IMR-90 (cell line): ENCODE measurements at regions of chr2 and their contacts with region 1.

Region 1: GRCh38 chr2:176638167-176639015 is 369.1 kb downstream of the MTX2 start:
- DNase-seq: peak; percentile 45
- ATAC-seq: peak; percentile 92
- H3K4me3 ChIP-seq: peak overlapping the region; percentile 38
- H3K27ac ChIP-seq: no peak overlapping the region
- H3K4me1 ChIP-seq: no peaks in the 10 kb centered on the region
- H3K27me3 ChIP-seq: peaks cover 33% of the 10 kb centered on the region
- CTCF ChIP-seq: peak; percentile 93
- POLR2A ChIP-seq: no peak
- RAD21 ChIP-seq: peak; percentile 92

Region 2: GRCh38 chr2:175734679-175735078 is 903.7 kb before region 1 on chr2:
- CTCF ChIA-PET with region 1: no interaction called
- POLR2A ChIA-PET with region 1: no interaction called
- dilution Hi-C with region 1: no loop called
- in situ Hi-C with region 1: no loop called
- intact Hi-C with region 1: no loop called
- DNase-seq: no peak
- ATAC-seq: no peak
- H3K4me3 ChIP-seq: no peak overlapping the region
- H3K27ac ChIP-seq: no peak overlapping the region
- H3K4me1 ChIP-seq: no peaks in the 10 kb centered on the region
- H3K27me3 ChIP-seq: no peaks in the 10 kb centered on the region; the same call in 1 of the 2 replicates
- CTCF ChIP-seq: no peak
- POLR2A ChIP-seq: no peak
- RAD21 ChIP-seq: no peak

Region 3: DNA sequence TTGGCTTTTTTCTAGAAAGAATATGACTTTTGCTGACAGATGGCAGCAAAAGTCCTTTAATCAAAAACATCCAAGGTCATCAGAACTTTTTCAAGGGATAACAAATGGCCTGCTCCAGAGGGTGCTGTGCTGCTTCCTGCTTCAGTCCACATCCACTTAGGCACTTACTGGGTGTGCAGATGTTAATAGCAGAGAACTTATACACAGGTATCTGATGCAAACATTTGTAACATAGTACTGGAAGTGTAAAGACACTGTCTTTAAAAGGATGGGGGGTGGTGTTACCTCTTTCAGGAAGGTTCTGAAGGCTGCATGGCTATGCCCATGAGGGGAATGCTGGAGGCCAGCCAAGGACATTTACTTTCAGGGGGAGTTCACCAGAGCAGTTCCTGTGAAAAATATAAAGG is 503.4 kb before region 1 on chr2:
- CTCF ChIA-PET with region 1: interaction called, 23 read pairs
- POLR2A ChIA-PET with region 1: no interaction called
- dilution Hi-C with region 1: no loop called
- in situ Hi-C with region 1: no loop called
- intact Hi-C with region 1: loop called (anchors 1 kb)
- DNase-seq: no peak
- ATAC-seq: no peak
- H3K4me3 ChIP-seq: no peak overlapping the region
- H3K27ac ChIP-seq: no peak overlapping the region
- H3K4me1 ChIP-seq: no peaks in the 10 kb centered on the region
- H3K27me3 ChIP-seq: peaks cover 93% of the 10 kb centered on the region
- CTCF ChIP-seq: no peak
- POLR2A ChIP-seq: no peak
- RAD21 ChIP-seq: no peak

Region 4: DNA sequence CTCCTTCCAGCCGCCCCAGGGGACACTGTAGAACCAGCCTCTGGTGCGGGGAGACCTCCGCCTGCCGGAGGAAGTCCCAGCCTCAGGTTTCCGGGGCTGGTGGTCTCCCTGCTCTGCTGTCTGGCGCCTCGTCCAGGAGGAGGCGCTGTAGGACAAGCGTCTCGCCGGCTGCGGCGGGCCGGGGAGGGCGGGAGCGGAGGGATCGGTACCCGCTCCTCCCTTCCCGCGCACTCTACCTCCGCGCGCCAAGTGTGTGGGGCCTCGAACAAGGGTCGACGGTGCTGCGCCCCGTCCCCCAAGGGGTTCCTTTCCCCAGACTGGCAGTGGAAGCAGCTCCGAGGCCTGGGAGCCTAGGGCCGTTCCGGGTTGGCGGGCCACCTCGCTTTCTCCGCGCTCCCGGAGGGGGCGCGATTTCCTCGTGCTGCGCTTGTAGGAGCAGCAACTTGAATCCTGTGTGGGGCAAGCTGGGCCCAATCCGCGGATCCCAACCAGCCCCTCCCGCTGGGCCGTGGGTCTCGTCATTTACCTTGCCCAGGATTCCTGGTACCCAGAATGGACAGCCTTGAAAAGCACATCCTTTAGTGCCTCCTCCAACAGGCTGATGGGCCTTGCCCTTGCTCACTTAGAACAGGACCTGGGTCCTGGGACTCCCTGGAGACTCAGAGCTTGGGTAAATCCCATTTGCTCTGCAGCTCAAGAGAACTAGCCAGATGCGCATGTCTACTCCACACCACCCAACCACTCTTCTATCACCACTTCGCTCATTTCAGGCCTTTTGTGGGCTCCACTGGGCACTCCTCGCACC is 497.7 kb before region 1 on chr2:
- CTCF ChIA-PET with region 1: interaction called, 18 read pairs
- POLR2A ChIA-PET with region 1: no interaction called
- dilution Hi-C with region 1: no loop called
- in situ Hi-C with region 1: no loop called
- intact Hi-C with region 1: loop called (anchors 1 kb)
- DNase-seq: peak; percentile 46
- ATAC-seq: peak; percentile 95
- H3K4me3 ChIP-seq: peak overlapping the region; percentile 50
- H3K27ac ChIP-seq: no peak overlapping the region
- H3K4me1 ChIP-seq: no peaks in the 10 kb centered on the region
- H3K27me3 ChIP-seq: peaks cover 74% of the 10 kb centered on the region
- CTCF ChIP-seq: peak; percentile 82
- POLR2A ChIP-seq: no peak
- RAD21 ChIP-seq: peak; percentile 93

Region 5: GRCh38 chr2:176554101-176555048 is 84.0 kb before region 1 on chr2:
- CTCF ChIA-PET with region 1: interaction called, 3 read pairs
- POLR2A ChIA-PET with region 1: no interaction called
- dilution Hi-C with region 1: no loop called
- in situ Hi-C with region 1: no loop called
- intact Hi-C with region 1: loop called (anchors 1 kb)
- DNase-seq: peak; percentile 52
- ATAC-seq: peak; percentile 75
- H3K4me3 ChIP-seq: peak overlapping the region; percentile 38
- H3K27ac ChIP-seq: no peak overlapping the region
- H3K4me1 ChIP-seq: no peaks in the 10 kb centered on the region
- H3K27me3 ChIP-seq: peaks cover 16% of the 10 kb centered on the region
- CTCF ChIP-seq: peak; percentile 80
- POLR2A ChIP-seq: no peak
- RAD21 ChIP-seq: peak; percentile 62

Region 6: DNA sequence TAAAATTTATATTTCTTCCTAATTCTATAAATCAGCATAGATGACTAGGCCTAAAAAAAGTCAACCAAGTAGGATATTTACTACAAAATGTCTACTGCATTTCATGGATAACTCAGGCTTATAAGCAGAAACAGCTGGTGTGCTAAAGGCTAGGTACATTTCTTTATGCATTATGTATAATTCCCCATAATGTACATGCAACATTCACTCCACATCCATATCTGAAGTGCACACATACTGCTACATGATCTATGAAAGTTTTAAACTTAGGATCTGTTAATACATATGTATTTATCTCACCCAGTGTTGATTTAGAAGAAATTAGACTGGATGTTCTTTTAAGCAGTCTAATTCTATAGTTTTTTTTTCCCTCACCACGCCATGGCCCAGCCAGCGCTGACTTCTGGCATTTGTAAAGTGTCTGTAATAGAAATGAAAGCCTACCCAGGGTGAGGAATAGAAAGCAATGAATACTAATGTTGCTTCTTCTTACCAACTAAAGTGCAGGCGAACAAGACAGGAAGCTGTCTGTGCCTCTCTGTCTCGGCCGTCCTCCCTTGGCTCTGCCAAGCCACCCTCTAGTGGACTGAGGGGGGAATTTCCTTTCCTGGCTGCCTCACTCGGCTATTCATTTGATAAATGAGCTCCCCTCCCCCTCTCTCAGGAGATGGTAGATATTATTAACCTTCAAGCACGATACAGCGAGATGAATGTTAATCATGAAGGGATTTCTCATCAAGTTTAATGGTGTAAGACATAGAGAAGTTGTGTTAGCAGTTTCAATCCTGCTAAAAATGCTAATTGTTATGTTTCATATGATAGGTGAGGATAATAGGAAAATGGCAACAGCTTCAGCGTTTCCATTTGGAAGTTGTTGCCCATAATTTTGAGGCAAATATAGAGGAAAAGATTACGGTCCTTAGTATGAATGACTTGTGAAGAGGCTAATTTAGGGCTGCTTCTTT is 15.4 kb after region 1 on chr2:
- CTCF ChIA-PET with region 1: interaction called, 17 read pairs
- POLR2A ChIA-PET with region 1: no interaction called
- dilution Hi-C with region 1: no loop called
- in situ Hi-C with region 1: no loop called
- intact Hi-C with region 1: no loop called
- DNase-seq: peak; percentile 55
- ATAC-seq: peak; percentile 86
- H3K4me3 ChIP-seq: no peak overlapping the region
- H3K27ac ChIP-seq: no peak overlapping the region
- H3K4me1 ChIP-seq: no peaks in the 10 kb centered on the region
- H3K27me3 ChIP-seq: no peaks in the 10 kb centered on the region; the same call in 1 of the 2 replicates
- CTCF ChIP-seq: peak; percentile 59
- POLR2A ChIP-seq: no peak
- RAD21 ChIP-seq: no peak; the same call in 1 of the 2 replicates